Left cardiac atrium (tissue), 4 donors: ENCODE measurements at regions of chr6 and their contacts with region 1.

Region 1: GRCh38 chr6:145798530-145798929 is 16.1 kb downstream of the FBXO30 start:
- DNase-seq: no peak
- ATAC-seq: peak in 1 of 2 donors; percentile 46

Region 2: GRCh38 chr6:145749632-145750031 is 48.9 kb before region 1 on chr6:
- intact Hi-C with region 1: loop called in 1 of 2 experiments (anchors 10 kb)
- DNase-seq: no peak
- ATAC-seq: peak; percentile 34 to 70

Region 3: DNA sequence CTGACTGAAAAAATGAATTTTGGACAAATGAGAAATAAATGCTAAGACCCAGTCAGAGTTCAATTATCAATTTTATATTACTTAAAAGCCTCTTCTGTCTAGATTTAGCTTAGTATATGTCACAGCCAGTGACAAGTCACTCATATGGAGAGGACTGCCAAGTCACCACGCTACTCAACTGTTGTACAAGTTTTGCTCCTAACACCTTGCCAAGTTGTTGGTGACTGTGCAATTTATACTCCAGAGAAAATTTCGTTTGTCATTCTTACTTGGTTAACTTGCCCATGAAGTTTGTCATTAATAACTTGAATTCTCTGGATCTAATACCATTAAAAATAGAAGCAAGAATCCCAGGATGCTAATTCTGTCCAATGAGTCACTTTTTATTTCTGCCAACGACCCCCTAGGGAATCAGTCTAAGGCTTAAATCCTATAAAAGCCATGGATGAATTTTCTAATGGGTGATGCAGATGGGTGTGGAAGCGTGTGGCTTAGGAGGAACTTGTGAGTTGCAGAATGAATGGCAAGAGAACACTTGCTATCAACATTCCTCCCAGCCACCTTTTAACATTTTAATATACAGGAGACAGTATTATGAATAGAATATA is 46.5 kb after region 1 on chr6:
- intact Hi-C with region 1: no loop called
- DNase-seq: no peak
- ATAC-seq: peak in 1 of 2 donors; percentile 47

Region 4: GRCh38 chr6:146028293-146028691 is 229.8 kb after region 1 on chr6:
- intact Hi-C with region 1: no loop called
- DNase-seq: peak; percentile 64
- ATAC-seq: peak; percentile 82 to 90